GM10248 (cell line): ENCODE measurements at regions of chr7 and their contacts with region 1.

Region 1: DNA sequence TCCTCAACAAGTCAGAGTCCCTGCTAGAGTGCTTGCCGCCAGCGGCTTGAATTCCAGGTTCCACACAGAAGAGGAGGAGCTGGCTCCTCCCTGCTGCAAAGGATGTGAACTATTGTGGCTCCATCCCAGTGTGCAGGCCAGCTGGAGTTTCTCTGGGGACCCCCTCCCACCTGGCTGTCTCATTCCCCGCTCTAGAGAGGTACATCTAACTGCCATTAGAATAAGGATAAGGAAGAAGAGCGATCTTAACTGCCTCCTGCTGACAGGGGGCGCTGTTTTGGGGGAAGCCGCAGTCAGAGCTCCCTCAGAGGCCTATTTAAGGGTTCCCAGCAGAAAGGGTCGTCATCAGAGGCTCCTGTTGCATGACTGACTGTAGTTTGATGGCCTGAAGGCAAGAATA is 40.8 kb upstream of the HECW1 start:
- DNase-seq: no peak
- CTCF ChIP-seq: peak; percentile 38

Region 2: DNA sequence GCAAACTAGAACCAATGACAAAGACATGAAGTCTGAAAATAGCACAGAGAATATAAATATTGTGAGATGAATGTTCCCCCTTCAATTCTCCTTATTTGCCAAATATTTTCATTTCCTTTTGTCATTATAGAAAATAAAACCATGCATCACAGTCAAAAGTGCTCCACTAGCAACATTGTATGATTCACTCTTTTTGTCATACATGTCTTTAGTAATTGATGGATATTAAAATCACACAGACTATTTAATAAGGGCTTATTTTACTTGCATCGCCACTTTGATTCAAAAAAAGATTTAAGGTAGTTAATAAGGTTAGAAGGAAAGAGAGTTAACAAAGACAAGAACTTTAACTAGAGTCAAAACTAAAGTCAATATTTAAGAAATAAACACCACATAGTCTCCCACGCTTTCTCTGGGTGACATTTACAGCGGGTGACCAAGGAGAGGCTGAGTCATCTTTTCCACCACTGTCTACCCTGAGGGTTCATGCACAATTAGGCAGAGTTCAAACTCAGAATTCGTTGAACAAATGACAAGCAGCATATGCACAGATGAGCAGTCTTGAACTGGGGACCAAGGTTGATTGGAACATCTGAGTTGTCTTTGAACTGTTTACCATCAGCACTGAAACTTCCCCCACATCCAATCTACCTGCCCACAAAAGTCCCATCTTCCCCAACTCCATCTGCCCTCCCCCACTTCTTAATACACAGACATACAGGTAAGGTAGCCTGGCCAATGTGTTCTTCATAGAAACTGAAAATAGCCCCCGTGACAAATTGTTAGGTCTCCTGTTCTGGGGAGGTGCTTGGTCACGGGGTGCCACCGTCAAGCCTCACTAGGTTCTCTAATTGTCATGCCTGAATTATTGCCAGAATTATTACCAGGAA is 202.2 kb before region 1 on chr7:
- CTCF ChIA-PET with region 1: no interaction called
- POLR2A ChIA-PET with region 1: no interaction called
- DNase-seq: peak; percentile 70
- CTCF ChIP-seq: no peak

Region 3: DNA sequence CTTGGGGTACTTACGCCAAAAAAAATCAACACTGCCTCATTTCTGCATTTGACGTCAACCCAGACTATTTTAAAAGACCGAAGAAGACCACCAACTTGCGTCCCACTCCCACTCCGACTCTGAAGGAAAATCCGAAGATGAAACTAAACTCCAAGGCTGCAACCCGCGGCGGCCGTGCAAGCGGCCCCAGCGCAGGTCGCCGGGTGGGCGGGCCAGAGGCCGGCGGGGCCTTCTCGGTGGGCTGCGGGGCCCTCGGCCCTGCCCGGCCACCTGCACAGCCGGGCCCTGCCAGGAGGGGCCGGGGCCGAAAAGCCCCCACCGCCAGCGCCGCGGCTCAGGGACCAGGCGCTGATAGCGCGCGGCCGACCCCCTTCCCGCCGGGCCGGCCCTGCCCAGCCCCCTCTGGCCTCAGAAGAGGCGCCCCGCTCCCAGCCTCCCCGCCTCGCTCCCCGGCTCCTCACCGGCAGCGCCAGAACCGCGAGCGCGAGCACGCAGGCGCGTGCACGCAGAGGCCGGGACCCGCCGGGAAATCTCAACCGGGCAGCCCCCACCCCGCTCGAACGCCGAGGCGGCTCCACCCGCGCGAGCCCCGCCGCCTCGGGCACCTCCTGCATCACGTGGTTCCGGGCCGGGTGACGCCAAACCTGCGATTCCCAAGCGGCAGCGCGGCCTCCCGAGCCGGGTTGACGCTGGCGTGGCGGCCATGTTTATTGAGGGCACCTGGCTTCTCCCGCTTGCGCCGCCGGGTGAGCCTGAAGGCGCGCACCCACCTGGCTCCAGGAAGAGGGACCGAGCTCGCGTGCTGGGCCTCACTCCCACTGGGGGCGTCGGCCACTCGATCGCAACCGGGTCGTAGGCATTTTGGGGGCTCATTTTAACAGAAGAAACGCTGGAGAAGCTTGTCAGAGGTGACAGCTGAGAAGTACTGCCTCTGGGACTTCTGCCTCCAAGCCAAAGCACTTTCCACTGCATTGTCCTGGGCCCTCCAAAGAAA is 159.9 kb before region 1 on chr7 and contains the start of gene C7orf25:
- CTCF ChIA-PET with region 1: no interaction called
- POLR2A ChIA-PET with region 1: no interaction called
- DNase-seq: peak; percentile 94
- CTCF ChIP-seq: no peak

Region 4: DNA sequence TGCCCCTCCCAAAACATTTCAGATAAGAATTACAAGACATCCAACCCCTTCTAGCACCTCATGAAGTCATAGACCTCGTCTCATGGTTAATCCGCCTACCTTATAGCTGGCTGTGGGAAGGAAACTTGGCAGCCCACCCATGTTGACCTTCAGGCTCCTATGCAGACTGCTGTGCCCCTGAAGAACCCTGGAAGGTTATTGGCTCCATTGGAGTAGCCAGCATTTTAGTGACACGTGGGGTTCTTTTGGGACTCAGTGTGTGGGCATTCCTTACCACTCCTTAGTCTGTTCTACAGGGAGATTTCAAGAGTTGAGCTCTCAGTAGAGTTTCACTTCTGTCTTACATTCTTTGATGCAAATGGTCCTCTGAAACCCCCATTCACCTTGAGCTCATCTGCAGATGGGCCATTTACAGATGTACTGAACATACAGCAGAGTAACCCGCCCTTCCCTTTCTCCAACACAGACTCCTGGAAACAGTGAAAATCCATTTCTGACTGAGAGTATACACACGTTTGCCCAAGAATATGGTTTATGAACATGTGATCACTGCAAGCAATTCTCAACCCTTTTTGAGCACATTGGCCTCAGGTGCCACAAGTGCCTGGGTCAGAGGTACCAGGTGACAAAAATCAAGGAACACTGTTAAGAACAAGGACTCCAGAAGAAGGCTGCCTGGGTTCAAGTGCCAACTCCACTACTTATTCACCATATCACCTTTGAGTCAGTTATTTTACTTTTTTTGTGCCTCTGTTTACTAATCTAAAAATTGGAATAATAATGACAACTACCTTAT is 13.1 kb before region 1 on chr7:
- CTCF ChIA-PET with region 1: interaction called, 15 read pairs
- POLR2A ChIA-PET with region 1: no interaction called
- DNase-seq: peak; percentile 58
- CTCF ChIP-seq: no peak